ENCODE measurements at regions of chr14 and their contacts with region 1.

Region 1: DNA sequence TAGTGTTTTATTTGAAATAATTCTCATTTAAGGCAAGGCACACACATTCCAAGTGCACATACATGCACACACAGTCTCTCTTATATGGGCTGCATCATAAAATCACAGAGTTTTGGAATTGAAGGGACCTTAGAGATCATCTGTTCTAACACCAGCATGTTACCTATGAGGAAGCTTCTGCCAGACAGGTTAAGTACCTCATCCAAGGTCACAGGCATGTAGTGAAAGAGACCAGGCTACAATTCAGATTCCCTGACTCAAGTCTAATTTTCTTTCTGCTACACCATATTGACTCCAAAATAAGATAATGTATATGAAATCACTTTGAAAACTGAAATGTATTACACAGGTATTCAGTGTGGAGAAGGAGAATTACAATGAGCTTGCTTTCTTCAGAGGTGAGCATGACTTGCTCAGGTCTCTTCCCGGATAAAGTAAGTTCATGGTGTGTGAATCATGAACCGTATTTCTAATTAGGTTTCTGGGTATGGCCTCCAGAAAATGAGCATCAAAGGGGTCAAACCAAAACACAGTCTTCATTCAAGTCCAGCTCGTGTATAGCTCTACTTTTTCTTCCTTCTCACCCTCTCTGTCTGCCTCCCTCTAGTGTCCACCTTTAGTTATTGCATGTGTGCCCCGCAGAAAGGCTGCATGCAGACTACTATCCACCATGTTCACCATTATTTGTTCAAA is 411.9 kb downstream of the FUT8 start:
- DNase-seq: peak; percentile 81
- ATAC-seq: peak; percentile 87
- H3K4me3 ChIP-seq: no peak overlapping the region
- H3K27ac ChIP-seq: no peak overlapping the region
- H3K4me1 ChIP-seq: no peaks in the 10 kb centered on the region
- H3K27me3 ChIP-seq: peaks cover 39% of the 10 kb centered on the region
- CTCF ChIP-seq: peak; percentile 97

Region 2: DNA sequence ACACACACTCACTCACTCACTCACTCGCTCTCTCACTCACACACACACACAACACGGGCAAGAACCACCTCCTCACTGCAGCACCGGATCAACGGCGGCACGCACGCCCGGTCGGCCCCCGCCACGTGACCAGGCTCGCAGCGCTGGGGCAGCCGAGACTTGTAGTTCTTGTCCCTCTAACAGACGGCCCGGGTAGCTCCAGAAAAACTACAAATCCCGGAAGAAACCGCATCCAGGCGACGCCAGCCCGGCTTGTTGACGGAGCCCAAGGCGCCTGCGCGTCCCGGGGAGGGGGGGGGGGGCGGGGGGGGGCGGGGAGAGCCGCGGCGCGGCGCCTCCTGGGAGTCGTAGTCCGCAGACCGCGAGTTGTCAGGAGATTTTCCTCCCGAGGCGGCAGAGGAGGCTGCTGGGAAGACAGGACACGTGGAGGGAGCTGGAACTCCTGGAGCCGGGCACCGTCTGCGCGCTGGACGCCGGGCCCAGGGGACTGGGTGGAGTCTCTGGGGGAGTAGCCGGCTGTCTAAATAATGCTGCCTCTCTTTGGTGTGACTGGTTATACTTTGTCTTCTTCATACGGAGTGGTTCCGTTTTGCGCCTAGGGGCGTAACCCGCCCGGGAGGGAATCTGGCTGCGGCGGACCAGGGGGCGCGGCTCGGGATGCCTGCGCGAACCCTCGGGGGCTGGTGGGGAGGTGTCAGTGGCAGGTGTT is 721.8 kb before region 1 on chr14 and contains the start of gene MAX:
- CTCF ChIA-PET with region 1: interaction called, 16 read pairs
- POLR2A ChIA-PET with region 1: no interaction called
- intact Hi-C with region 1: no loop called
- DNase-seq: peak; percentile 98
- ATAC-seq: peak; percentile 90
- H3K4me3 ChIP-seq: peak within 1 kb of the TSS; percentile 89
- H3K27ac ChIP-seq: peak within 1 kb of the TSS; percentile 57
- H3K4me1 ChIP-seq: peaks cover 21% of the 10 kb centered on the region
- H3K27me3 ChIP-seq: no peaks in the 10 kb centered on the region
- CTCF ChIP-seq: no peak
- total RNA-seq, gene MAX: 58.8 and 68.9 TPM in 2 replicates

Region 3: GRCh38 chr14:65164068-65164824 is 660.2 kb before region 1 on chr14:
- CTCF ChIA-PET with region 1: interaction called, 22 read pairs
- POLR2A ChIA-PET with region 1: no interaction called
- intact Hi-C with region 1: loop called (anchors 1 kb)
- DNase-seq: peak; percentile 79
- ATAC-seq: peak; percentile 80
- H3K4me3 ChIP-seq: no peak overlapping the region
- H3K27ac ChIP-seq: no peak overlapping the region
- H3K4me1 ChIP-seq: peaks cover 4% of the 10 kb centered on the region; the same call in 1 of the 2 replicates
- H3K27me3 ChIP-seq: no peaks in the 10 kb centered on the region
- CTCF ChIP-seq: peak; percentile 94

Region 4: DNA sequence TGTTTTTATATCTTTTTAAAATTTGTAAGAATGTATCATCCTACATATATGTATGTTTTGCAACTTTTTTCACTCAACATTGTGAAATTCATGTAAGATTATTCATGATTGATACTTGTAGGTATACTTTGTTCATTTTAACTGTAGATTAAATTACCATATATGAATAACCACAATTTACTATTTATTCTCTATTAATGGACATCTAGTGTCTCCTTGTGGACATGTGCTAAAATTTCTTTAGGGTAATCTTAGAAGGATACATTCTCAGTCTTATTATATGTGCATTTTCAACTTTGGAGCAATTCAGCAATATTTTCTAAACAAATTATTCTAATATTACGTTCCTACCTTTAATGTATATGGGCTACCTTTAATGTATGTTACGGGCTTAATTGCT is 219.5 kb before region 1 on chr14:
- CTCF ChIA-PET with region 1: no interaction called
- POLR2A ChIA-PET with region 1: no interaction called
- intact Hi-C with region 1: loop called (anchors 5 kb)
- DNase-seq: peak; percentile 35
- ATAC-seq: peak; percentile 74
- H3K4me3 ChIP-seq: no peak overlapping the region
- H3K27ac ChIP-seq: no peak overlapping the region
- H3K4me1 ChIP-seq: peaks cover 4% of the 10 kb centered on the region; the same call in 1 of the 2 replicates
- H3K27me3 ChIP-seq: no peaks in the 10 kb centered on the region
- CTCF ChIP-seq: peak; percentile 76

Region 5: GRCh38 chr14:65627315-65627714 is 197.1 kb before region 1 on chr14:
- CTCF ChIA-PET with region 1: interaction called, 4 read pairs
- POLR2A ChIA-PET with region 1: no interaction called
- intact Hi-C with region 1: loop called (anchors 5 kb)
- DNase-seq: no peak
- ATAC-seq: no peak
- H3K4me3 ChIP-seq: no peak overlapping the region
- H3K27ac ChIP-seq: no peak overlapping the region
- H3K4me1 ChIP-seq: no peaks in the 10 kb centered on the region
- H3K27me3 ChIP-seq: no peaks in the 10 kb centered on the region
- CTCF ChIP-seq: no peak

Region 6: GRCh38 chr14:65750906-65751305 is 73.5 kb before region 1 on chr14:
- CTCF ChIA-PET with region 1: interaction called, 7 read pairs
- POLR2A ChIA-PET with region 1: interaction called, 4 read pairs
- intact Hi-C with region 1: loop called (anchors 5 kb)
- DNase-seq: no peak
- ATAC-seq: peak; percentile 7; the same call in 1 of the 2 replicates
- H3K4me3 ChIP-seq: no peak overlapping the region
- H3K27ac ChIP-seq: no peak overlapping the region
- H3K4me1 ChIP-seq: no peaks in the 10 kb centered on the region
- H3K27me3 ChIP-seq: no peaks in the 10 kb centered on the region
- CTCF ChIP-seq: no peak

Region 7: GRCh38 chr14:65776193-65776852 is 48.1 kb before region 1 on chr14:
- CTCF ChIA-PET with region 1: interaction called, 3 read pairs
- POLR2A ChIA-PET with region 1: no interaction called
- intact Hi-C with region 1: loop called (anchors 2 kb)
- DNase-seq: no peak
- ATAC-seq: peak; percentile 51
- H3K4me3 ChIP-seq: no peak overlapping the region
- H3K27ac ChIP-seq: no peak overlapping the region
- H3K4me1 ChIP-seq: peaks cover 15% of the 10 kb centered on the region
- H3K27me3 ChIP-seq: no peaks in the 10 kb centered on the region
- CTCF ChIP-seq: no peak